ENCODE measurements at regions of chr10 and their contacts with region 1.

Region 1: GRCh38 chr10:110311357-110311949 is 6.7 kb upstream of the SMNDC1 start:
- DNase-seq: peak; percentile 47
- H3K4me3 ChIP-seq: no peak overlapping the region
- H3K27ac ChIP-seq: no peak overlapping the region
- H3K4me1 ChIP-seq: no peaks in the 10 kb centered on the region
- H3K27me3 ChIP-seq: no peaks in the 10 kb centered on the region
- CTCF ChIP-seq: peak; percentile 65

Region 2: DNA sequence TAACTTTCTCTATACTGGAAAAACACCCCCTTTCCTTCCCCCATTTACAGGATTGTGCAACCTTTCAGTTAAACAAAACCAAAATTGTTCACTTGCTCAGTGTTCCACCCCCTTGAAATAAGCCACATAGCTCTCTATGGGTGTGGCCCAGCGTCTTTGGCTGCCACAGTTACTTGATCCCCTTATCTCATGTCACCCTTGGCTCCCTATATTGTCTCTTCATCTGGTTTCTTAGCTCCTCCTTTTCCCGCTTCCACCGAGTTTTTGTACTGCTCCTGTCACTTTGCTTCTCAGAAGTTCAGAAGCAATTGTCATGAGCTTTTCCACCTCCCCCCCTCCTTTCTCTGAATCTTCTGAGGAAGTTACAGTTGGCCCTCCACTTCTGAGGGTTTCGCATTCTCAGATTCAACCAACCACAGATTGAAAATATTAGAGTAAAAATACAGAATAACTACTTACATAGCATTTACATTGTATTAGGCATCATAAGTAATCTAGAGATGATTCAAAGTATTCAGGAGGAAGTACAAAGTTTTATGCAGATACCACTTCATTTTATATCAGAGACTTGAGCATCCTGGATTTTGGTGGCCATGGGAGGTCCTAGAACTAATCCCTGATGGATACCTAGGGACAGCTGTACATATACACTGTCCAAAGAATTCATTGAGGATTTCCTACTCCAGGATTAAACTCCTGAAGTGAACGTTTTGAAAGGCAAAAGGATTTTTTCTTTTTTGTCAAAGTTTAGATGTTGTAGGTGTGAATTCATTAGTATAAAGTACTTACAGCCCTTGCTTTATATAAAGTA is 243.3 kb before region 1 on chr10:
- intact Hi-C with region 1: no loop called
- DNase-seq: peak; percentile 35
- H3K4me3 ChIP-seq: no peak overlapping the region
- H3K27ac ChIP-seq: peak overlapping the region; percentile 15
- H3K4me1 ChIP-seq: no peaks in the 10 kb centered on the region
- H3K27me3 ChIP-seq: no peaks in the 10 kb centered on the region
- CTCF ChIP-seq: no peak

Region 3: DNA sequence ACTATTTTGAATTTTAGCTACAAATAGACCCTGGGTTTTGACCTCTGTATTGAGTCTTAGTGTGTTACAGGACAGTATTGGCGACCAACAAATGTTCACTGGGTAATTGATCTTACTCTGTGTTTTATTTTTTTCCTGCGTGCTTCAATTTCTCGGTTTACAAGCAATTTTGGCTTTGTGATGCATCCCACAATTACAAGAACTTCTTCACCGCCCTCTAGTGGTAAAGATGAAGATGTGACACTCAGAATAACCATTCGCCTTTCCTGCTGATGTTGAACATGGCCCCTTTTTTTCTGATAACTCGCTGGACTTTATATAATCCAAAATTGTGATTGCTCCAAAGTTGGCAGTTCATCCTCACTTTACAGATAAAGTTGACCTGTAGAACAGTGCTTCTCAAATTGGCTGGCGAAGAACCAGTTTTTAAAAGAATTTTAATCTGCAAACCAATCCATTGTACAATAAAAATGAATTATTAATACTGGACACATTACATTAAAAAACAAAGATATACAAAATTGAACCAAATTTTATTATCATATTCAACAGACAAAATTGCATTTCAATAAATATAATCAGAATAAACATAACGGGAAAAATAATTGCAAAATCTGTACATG is 235.8 kb after region 1 on chr10:
- intact Hi-C with region 1: loop called (anchors 2 kb)
- DNase-seq: no peak
- H3K4me3 ChIP-seq: no peak overlapping the region
- H3K27ac ChIP-seq: no peak overlapping the region
- H3K4me1 ChIP-seq: no peaks in the 10 kb centered on the region
- H3K27me3 ChIP-seq: no peaks in the 10 kb centered on the region
- CTCF ChIP-seq: peak; percentile 68

Region 4: GRCh38 chr10:110597476-110597875 is 286.0 kb after region 1 on chr10:
- intact Hi-C with region 1: loop called (anchors 5 kb)
- DNase-seq: no peak
- H3K4me3 ChIP-seq: no peak overlapping the region
- H3K27ac ChIP-seq: no peak overlapping the region
- H3K4me1 ChIP-seq: no peaks in the 10 kb centered on the region
- H3K27me3 ChIP-seq: no peaks in the 10 kb centered on the region
- CTCF ChIP-seq: no peak